Body of pancreas (tissue), 4 donors: ENCODE measurements at regions of chr21 and their contacts with region 1.

Region 1: GRCh38 chr21:34889716-34890469 is 159.2 kb downstream of the RUNX1 start:
- DNase-seq: peak; percentile 67 to 78 (median 73)
- ATAC-seq: peak; percentile 55
- H3K4me3 ChIP-seq: peak overlapping the region; percentile 24 to 29
- H3K27ac ChIP-seq: peak overlapping the region; percentile 68 to 89 (median 80)
- H3K4me1 ChIP-seq: peaks cover 50% of the 10 kb centered on the region
- H3K27me3 ChIP-seq: peaks cover 0 to 31% of the 10 kb centered on the region in 2 donors
- CTCF ChIP-seq: peak; percentile 13 to 90 (median 76)
- POLR2A ChIP-seq: peak in 2 of 3 donors; percentile 4 to 19

Region 2: DNA sequence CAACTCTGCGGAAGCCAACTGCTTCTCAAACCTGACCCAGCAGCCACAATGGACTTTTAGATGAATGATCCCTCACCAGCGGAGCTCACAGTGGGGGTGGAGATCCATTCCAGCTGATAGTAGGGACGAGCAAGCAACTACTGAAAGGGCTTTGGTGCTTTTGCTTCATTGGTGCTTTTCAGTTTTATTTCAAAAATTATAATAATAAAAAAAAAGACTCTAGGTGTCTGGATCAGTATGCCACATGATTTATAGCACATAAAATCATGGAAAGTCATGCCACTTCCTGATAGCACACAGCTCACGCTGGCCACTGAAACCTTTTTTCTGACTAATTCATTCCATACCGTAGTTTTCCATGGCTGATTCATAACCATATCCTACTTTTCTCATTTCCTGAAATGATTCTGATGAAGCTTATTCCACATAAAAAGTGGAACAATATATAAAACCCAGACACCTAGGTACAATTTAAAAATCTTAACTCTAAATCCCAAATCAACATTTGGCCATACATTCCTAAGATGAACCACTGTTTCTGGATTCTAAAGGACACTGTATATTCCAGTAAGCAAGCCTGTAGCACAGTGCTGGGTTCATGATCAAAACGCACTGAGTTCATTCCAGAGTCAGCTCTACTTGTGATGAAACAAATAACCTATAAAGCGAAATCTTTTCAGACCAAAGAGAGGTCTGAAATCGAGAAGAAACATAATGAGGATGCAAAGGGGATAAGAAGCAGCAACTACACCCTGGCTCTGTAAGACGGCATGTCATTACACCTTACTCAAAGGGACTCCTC is 336.5 kb before region 1 on chr21:
- intact Hi-C with region 1: no loop called
- DNase-seq: no peak
- ATAC-seq: peak; percentile 63
- H3K4me3 ChIP-seq: no peak overlapping the region
- H3K27ac ChIP-seq: peak overlapping the region in 3 of 4 donors; percentile 24 to 56 (median 52)
- H3K4me1 ChIP-seq: peaks cover 14% of the 10 kb centered on the region
- H3K27me3 ChIP-seq: no peaks in the 10 kb centered on the region
- CTCF ChIP-seq: no peak
- POLR2A ChIP-seq: no peak

Region 3: DNA sequence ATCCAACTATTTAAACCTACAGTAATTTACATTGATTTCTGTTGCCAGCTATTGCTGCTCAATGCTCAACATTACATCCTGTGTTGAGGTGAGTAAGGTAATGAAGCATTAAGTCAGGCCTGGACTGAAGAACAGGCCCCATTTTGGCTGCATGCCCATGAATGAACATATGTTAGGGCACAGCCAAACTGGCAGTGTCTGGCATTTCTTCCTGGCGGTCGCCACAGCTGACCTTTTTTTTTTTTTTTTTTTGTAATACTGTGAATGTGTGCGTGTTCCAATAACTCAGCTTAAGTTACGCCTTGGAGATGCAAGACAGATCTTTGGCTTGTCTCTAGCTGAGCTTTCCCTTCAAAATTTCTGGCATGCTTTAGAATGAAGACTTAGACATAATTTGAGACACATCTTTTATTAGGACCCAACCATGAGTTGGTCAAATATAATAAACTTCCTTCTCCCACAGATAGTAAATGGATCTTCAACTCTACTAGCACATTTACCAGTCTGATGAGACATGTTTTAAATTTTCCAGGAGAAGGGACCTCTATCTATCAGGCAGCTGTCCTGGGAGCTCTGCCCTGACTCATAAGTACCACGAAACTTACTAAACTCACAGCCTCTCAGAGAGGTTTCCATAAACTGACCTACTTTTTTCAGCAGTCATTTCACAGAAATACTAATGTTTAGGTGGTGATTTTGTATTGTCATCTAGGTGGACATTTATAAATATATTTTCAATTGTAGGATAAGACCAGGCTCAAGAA is 500.3 kb after region 1 on chr21:
- intact Hi-C with region 1: loop called (anchors 10 kb)
- DNase-seq: peak in 3 of 4 donors; percentile 32 to 62 (median 49)
- ATAC-seq: no peak
- H3K4me3 ChIP-seq: no peak overlapping the region
- H3K27ac ChIP-seq: no peak overlapping the region
- H3K4me1 ChIP-seq: no peaks in the 10 kb centered on the region
- H3K27me3 ChIP-seq: no peaks in the 10 kb centered on the region
- CTCF ChIP-seq: no peak
- POLR2A ChIP-seq: no peak